ENCODE measurements at regions of chr22 and their contacts with region 1.

Region 1: GRCh38 chr22:32411829-32412592 is at the start of gene RTCB:
- DNase-seq: peak; percentile 24
- H3K4me3 ChIP-seq: peak within 1 kb of the TSS; percentile 73 to 93 (median 80)
- H3K27ac ChIP-seq: peak within 1 kb of the TSS; percentile 70 to 92 (median 88)
- H3K4me1 ChIP-seq: peaks cover 10 to 47% (median 14%) of the 10 kb centered on the region in 3 donors
- H3K27me3 ChIP-seq: no peaks in the 10 kb centered on the region
- CTCF ChIP-seq: peak in 1 of 6 experiments; percentile 29
- POLR2A ChIP-seq: peak in 2 of 4 donors; percentile 58 to 70
- total RNA-seq, gene RTCB: 48.1 to 79.2 (median 70.9) TPM

Region 2: DNA sequence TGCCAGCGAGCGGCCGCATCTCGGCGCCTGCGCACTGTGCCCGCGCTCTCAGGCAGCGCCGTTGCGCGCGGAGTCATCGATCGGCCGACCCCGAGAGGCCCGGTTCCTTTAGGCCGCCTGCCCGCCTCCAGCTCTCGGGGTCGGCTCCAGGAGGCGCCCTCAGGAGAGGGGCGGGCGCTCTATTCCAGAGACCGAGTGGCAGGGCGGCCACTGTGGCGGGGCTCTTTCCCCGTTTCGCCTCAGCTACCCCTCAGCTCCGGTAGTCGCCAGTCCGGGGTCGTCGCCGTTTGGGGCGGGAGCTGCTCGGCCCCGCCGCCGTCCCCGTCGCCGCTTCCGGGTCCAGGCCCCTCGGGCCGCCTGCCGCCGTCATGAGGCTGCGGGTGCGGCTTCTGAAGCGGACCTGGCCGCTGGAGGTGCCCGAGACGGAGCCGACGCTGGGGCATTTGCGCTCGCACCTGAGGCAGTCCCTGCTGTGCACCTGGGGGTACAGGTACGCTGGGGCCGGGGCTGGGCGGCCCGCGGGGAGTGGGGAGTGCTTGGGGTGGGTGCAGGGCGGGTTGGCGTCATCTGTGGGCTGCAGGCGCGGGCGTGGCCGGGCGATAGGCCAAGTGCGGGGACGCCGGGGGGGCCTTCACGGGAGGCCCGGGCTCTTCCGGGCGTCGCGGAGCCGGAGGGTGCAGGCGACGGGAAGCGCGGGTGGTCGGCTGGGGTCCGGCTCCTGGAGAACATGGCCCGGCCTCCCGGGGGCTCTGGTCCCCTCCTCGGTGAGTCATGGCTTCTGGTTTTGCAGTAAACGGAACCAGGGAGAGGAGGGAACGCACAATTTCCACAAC is 62.8 kb after region 1 on chr22 and contains the start of gene FBXO7:
- intact Hi-C with region 1: loop called (anchors 10 kb)
- DNase-seq: peak; percentile 36
- H3K4me3 ChIP-seq: peak within 1 kb of the TSS; percentile 61 to 99 (median 80)
- H3K27ac ChIP-seq: peak within 1 kb of the TSS; percentile 94 to 99 (median 96)
- H3K4me1 ChIP-seq: peaks cover 9 to 46% (median 15%) of the 10 kb centered on the region in 3 donors
- H3K27me3 ChIP-seq: no peaks in the 10 kb centered on the region
- CTCF ChIP-seq: peak in 5 of 6 experiments; percentile 19 to 53 (median 27)
- POLR2A ChIP-seq: peak in 3 of 4 donors; percentile 58 to 85 (median 82)
- total RNA-seq, gene FBXO7: 31.8 to 67.1 (median 49.6) TPM

Region 3: GRCh38 chr22:32528984-32529982 is 117.3 kb after region 1 on chr22:
- intact Hi-C with region 1: no loop called
- DNase-seq: no peak
- H3K4me3 ChIP-seq: peak overlapping the region in 1 of 4 donors; percentile 18
- H3K27ac ChIP-seq: peak overlapping the region; percentile 34 to 68 (median 60)
- H3K4me1 ChIP-seq: peaks cover 16 to 58% (median 36%) of the 10 kb centered on the region in 3 donors
- H3K27me3 ChIP-seq: no peaks in the 10 kb centered on the region
- CTCF ChIP-seq: peak; percentile 76 to 95 (median 86)
- POLR2A ChIP-seq: no peak